Dorsolateral prefrontal cortex (tissue), 120 donors: ENCODE measurements at regions of chr2 and their contacts with region 1.

Region 1: DNA sequence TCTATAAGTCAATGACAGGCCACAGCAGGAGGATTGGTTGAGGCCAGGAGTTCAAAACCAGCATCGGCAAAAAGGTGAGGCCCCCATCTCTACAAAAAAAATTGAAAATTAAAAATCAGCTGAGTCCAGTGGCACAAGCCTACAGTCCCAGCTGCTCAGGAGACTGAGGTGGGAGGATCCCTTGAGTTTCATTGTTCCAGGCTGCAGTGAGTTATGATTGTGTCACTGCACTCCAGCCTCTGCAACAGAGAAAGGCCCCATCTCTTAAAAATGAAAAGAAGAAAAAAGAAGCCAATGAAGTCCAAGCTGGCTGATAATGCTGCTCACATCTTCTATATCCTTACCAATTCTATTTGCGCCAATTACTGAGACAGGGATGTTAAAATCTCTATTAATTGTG is 39.1 kb downstream of the MRPS5 start:
- DNase-seq: no peak
- H3K4me3 ChIP-seq: no peak overlapping the region
- H3K27ac ChIP-seq: no peak overlapping the region
- H3K27me3 ChIP-seq: no peaks in the 10 kb centered on the region
- CTCF ChIP-seq: no peak

Region 2: DNA sequence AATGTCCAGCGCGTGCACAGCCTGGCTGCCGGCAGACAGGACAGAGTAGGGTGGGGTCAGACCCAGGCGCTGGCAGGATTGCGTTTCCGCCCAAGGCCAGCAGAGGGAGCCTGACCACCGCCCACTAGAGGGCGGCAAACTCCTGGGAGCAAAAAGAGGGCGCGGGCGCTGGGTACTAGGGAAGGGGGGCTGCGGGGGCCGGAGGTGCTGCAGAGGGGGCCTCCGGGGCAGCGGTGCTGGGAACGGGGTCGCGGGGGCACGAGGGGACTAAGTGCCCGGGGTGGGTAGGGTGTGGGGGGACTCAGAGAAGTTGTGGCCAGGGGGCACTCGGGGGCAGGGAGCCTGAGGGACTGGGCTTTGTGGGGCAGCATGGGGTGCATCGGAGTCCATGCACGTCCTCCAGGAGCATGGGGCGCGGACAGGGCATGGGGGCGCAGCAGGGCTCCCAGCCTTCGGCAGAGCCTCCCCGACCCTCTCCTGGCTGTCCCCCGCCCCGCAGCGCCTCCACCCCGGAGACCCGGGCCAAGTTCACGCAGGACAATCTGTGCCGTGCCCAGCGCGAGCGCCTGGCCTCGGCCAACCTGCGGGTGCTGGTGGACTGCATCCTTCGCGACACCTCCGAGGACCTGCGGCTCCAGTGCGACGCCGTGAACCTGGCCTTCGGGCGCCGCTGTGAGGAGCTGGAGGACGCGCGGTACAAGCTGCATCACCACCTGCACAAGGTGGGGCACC is 208.0 kb before region 1 on chr2:
- intact Hi-C with region 1: loop called in 1 of 2 experiments (anchors 10 kb)
- DNase-seq: peak in 5 of 10 donors; percentile 21 to 48 (median 33)
- H3K4me3 ChIP-seq: no peak overlapping the region
- H3K27ac ChIP-seq: no peak overlapping the region
- H3K27me3 ChIP-seq: peaks cover 0 to 75% (median 30%) of the 10 kb centered on the region in 45 donors
- CTCF ChIP-seq: peak in 54 of 56 donors; percentile 15 to 79 (median 64)

Region 3: DNA sequence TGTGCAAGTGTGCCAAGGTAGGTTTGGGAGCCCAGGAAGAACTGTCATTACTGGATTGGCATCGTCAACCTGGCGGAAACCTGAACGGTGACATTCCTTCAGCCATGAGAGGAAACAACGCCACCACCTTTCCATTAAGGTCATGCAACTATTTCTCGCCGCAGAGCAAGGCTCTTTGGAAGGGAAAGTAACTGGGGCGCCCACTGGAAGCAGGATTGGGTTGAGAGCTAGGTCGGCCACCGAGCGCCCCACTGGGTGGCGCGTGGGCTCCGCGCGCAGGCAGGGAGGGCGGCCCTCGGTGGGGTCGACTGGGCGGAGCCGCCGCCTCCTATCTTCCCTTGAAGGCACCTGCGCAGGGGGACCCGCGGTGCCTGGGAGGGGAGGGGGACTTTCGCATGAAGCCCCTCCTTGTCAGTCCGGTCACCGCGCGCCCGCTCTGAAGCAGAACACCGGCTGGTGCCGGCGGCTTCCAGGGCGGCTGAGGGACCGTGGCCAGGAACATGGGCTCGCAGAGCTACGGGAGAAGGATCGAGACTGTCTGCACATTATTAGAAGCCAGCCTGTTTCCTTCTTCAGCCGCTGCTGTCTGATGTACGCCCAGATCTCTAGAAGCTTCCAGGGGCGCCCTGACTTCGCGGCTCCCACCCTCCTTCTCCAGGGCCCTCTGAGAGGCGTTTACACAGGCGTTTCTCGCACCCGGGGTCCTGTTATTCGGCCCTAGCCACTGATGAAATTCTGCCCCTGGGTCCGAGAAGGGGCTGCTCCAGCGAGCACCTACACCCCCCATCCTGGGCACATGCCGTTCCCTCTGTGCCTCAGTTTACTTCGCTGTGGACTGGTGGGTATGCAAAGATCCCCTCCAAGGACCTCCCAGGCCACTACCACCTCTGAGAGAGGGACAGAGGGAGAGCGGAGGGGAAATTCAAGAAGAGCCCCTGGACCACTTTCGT is 84.2 kb before region 1 on chr2:
- intact Hi-C with region 1: loop called in 1 of 2 experiments (anchors 5 kb)
- DNase-seq: peak in 4 of 10 donors; percentile 21 to 58 (median 26)
- H3K4me3 ChIP-seq: peak overlapping the region in 56 of 59 donors; percentile 16 to 69 (median 50)
- H3K27ac ChIP-seq: peak overlapping the region in 4 of 59 donors; percentile 18 to 62 (median 50)
- H3K27me3 ChIP-seq: peaks cover 0 to 36% (median 16%) of the 10 kb centered on the region in 45 donors
- CTCF ChIP-seq: peak in 53 of 56 donors; percentile 12 to 81 (median 52)

Region 4: DNA sequence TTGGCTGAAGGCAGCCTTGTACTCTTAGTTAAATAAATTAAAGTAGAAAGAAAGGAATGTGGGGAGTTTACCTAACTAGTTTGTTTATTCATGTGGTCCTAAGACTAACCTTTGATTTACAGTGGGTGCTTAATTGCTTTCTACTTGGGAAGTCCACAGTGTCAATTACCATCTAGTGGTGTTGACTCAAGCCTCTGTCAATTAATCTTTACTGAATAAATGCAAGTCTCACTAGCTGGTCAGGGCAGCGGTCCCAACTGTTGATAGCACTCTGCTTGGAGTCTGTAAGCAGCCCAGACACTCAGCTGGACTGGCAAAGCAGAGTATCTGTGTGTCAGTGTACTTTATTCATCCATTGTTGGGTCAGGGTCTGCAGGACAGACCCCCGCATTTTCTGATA is 61.4 kb after region 1 on chr2:
- intact Hi-C with region 1: no loop called
- DNase-seq: no peak
- H3K4me3 ChIP-seq: no peak overlapping the region
- H3K27ac ChIP-seq: no peak overlapping the region
- H3K27me3 ChIP-seq: no peaks in the 10 kb centered on the region
- CTCF ChIP-seq: no peak